ENCODE measurements at regions of chr16 and their contacts with region 1.

Region 1: GRCh38 chr16:66608241-66609138 is 4.0 kb downstream of the CMTM3 start:
- DNase-seq: peak; percentile 86
- H3K4me3 Mint-ChIP-seq: no peak overlapping the region
- H3K27ac Mint-ChIP-seq: no peak overlapping the region
- H3K4me1 Mint-ChIP-seq: peaks cover 14% of the 10 kb centered on the region
- H3K27me3 Mint-ChIP-seq: no peaks in the 10 kb centered on the region
- CTCF ChIP-seq: peak; percentile 78

Region 2: GRCh38 chr16:66406534-66407221 is 201.8 kb before region 1 on chr16:
- CTCF ChIA-PET with region 1: interaction called, 4 read pairs
- POLR2A ChIA-PET with region 1: no interaction called
- intact Hi-C with region 1: loop called (anchors 2 kb)
- DNase-seq: peak; percentile 74
- H3K4me3 Mint-ChIP-seq: peak overlapping the region; percentile 72
- H3K27ac Mint-ChIP-seq: peak overlapping the region; percentile 37
- H3K4me1 Mint-ChIP-seq: peaks cover 24% of the 10 kb centered on the region
- H3K27me3 Mint-ChIP-seq: no peaks in the 10 kb centered on the region
- CTCF ChIP-seq: peak; percentile 83

Region 3: GRCh38 chr16:66569827-66570405 is 38.6 kb before region 1 on chr16:
- CTCF ChIA-PET with region 1: interaction called, 36 read pairs
- POLR2A ChIA-PET with region 1: no interaction called
- intact Hi-C with region 1: no loop called
- DNase-seq: peak; percentile 68
- H3K4me3 Mint-ChIP-seq: no peak overlapping the region
- H3K27ac Mint-ChIP-seq: peak overlapping the region; percentile 32
- H3K4me1 Mint-ChIP-seq: peaks cover 16% of the 10 kb centered on the region
- H3K27me3 Mint-ChIP-seq: no peaks in the 10 kb centered on the region
- CTCF ChIP-seq: no peak

Region 4: DNA sequence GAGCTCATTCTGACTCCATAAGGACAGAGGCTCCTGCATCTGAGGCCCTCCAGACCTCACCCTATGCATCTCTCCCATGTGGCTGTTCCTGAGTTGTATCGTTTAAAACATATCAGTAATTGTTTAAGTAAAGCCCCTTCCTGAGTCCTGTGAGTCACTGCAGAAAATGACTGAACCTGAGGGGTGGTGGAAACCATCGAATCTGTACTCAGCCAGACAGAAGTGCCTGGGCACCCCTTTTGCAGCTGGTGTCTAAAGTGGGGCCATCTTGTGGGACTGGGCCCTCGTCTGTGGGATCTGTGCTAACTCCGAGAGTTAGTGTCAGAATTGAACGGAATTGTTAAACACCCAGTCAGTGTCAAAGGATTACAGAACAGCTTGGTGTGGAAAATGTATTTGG is 21.4 kb after region 1 on chr16:
- CTCF ChIA-PET with region 1: interaction called, 11 read pairs
- POLR2A ChIA-PET with region 1: no interaction called
- intact Hi-C with region 1: no loop called
- DNase-seq: no peak
- H3K4me3 Mint-ChIP-seq: no peak overlapping the region
- H3K27ac Mint-ChIP-seq: no peak overlapping the region
- H3K4me1 Mint-ChIP-seq: no peaks in the 10 kb centered on the region
- H3K27me3 Mint-ChIP-seq: no peaks in the 10 kb centered on the region
- CTCF ChIP-seq: no peak

Region 5: DNA sequence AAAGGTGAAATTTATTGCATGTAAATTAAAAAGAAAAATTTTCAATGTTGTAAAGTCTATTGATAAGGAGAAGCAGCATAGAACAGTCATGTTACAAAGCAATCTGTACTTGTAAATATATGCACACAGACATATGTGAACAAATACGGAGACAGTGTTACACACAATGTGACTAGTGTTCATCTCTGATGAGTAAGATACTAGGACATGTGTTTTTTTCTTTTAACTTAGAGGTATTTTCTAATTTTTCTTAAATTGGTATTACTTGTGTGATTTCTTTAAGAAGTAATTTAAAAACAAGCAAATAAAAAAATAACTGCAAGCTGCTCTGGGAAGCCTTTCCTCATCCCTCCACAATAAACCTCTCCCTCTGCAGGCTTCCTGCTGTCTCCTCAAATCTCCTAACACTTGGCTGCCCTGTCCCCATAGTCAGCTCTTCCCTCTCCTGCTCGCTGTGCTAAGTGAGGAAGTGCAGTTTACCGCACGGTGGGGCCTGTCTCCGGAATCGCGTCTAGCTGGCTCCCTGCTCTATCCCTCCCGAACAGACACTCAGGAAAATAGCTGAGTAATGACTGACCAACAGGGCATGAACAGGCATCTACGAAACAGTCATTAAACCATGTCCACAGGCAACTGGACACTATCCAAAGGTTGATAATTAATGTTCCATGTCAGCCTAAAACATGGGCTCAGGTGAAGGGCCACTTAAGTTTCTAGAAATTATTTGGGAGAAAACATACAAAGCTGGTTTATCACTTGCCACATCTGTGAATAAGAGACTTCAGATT is 52.1 kb after region 1 on chr16:
- CTCF ChIA-PET with region 1: interaction called, 56 read pairs
- POLR2A ChIA-PET with region 1: interaction called, 7 read pairs
- intact Hi-C with region 1: loop called (anchors 2 kb)
- DNase-seq: peak; percentile 74
- H3K4me3 Mint-ChIP-seq: peak overlapping the region; percentile 34
- H3K27ac Mint-ChIP-seq: peak overlapping the region; percentile 78
- H3K4me1 Mint-ChIP-seq: peaks cover 25% of the 10 kb centered on the region
- H3K27me3 Mint-ChIP-seq: no peaks in the 10 kb centered on the region
- CTCF ChIP-seq: no peak

Region 6: GRCh38 chr16:66751303-66751991 is 143.0 kb after region 1 on chr16 and contains the start of gene DYNC1LI2:
- CTCF ChIA-PET with region 1: interaction called, 5 read pairs
- POLR2A ChIA-PET with region 1: interaction called, 3 read pairs
- intact Hi-C with region 1: loop called (anchors 10 kb)
- DNase-seq: peak; percentile 63
- H3K4me3 Mint-ChIP-seq: peak within 1 kb of the TSS; percentile 79
- H3K27ac Mint-ChIP-seq: peak within 1 kb of the TSS; percentile 92
- H3K4me1 Mint-ChIP-seq: peaks cover 30% of the 10 kb centered on the region
- H3K27me3 Mint-ChIP-seq: no peaks in the 10 kb centered on the region
- CTCF ChIP-seq: peak; percentile 83
- total RNA-seq, gene DYNC1LI2: 97.7 and 106 TPM in 2 replicates

Measured in MCF 10A (cell line).